ENCODE measurements at regions of chrX and their contacts with region 1.

Region 1: DNA sequence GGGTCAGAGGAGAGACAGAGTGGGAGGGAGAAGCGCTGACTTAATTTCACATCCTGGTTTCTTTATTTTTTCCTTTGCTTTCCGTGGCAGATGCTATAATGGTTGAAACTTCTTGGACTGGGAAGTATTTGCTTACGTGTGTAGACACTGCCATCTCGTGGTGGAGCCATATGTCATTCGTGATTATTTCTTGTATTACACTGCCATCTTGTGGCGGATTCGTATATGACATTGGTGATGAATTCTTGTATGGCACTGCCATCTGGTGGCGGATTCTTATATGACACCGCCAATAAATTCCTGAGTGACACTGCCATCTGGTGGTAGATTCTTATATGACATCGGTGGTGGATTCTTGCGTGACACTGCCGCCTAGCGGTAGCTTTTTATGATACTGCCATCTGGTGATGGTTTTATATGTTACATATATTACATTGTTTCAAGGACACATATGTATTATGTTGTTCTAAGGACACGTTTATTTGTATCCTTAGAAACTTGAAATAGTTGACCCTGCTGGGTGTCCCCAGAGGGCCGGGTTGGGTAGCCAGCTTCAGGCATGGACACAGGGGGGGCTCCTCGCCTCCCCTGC is 37.3 kb upstream of the CLCN4 start:
- DNase-seq: peak; percentile 64
- ATAC-seq: no peak
- H3K4me3 ChIP-seq: no peak overlapping the region
- H3K27ac ChIP-seq: no peak overlapping the region
- H3K4me1 ChIP-seq: no peaks in the 10 kb centered on the region
- H3K27me3 ChIP-seq: no peaks in the 10 kb centered on the region
- CTCF ChIP-seq: peak; percentile 98
- EP300 ChIP-seq: 0 out of 4 replicates have a peak, but pooled peaks of 1 of the 2 experiments have one; percentile 27
- POLR2A ChIP-seq: no peak
- RAD21 ChIP-seq: peak; percentile 99

Region 2: GRCh38 chrX:9626379-9626778 is 493.1 kb before region 1 on chrX:
- CTCF ChIA-PET with region 1: no interaction called
- POLR2A ChIA-PET with region 1: no interaction called
- in situ Hi-C with region 1: no loop called
- intact Hi-C with region 1: no loop called
- DNase-seq: no peak
- ATAC-seq: no peak
- H3K4me3 ChIP-seq: no peak overlapping the region
- H3K27ac ChIP-seq: no peak overlapping the region
- H3K4me1 ChIP-seq: peaks cover 10% of the 10 kb centered on the region
- H3K27me3 ChIP-seq: no peaks in the 10 kb centered on the region
- CTCF ChIP-seq: no peak
- EP300 ChIP-seq: no peak
- POLR2A ChIP-seq: no peak
- RAD21 ChIP-seq: no peak

Region 3: DNA sequence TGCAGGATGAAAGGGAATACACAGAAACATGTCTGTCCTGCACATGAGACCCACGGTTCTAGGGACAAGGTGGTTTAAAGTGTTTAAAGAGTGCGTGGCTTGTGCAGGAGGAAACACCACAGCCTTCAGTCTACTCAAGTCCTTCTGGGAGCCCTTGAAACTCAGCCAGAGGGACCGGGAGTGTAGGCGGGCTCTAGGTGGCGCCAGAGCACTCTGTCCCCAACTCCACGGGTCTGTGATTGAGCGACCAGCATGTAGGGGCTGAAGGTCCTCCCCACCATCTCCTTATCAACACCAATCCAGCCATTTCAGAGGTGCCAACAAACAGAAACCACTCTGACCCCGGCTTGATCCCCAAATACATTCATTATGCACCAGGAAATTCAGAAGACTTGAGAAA is 234.3 kb before region 1 on chrX:
- CTCF ChIA-PET with region 1: interaction called, 59 read pairs
- POLR2A ChIA-PET with region 1: no interaction called
- in situ Hi-C with region 1: no loop called
- intact Hi-C with region 1: loop called (anchors 1 kb)
- DNase-seq: peak; percentile 30
- ATAC-seq: peak; percentile 93
- H3K4me3 ChIP-seq: no peak overlapping the region
- H3K27ac ChIP-seq: no peak overlapping the region
- H3K4me1 ChIP-seq: 0 out of 2 replicates have a peak, but pooled peaks cover 21% of the 10 kb centered on the region
- H3K27me3 ChIP-seq: no peaks in the 10 kb centered on the region
- CTCF ChIP-seq: peak; percentile 78
- EP300 ChIP-seq: no peak
- POLR2A ChIP-seq: no peak
- RAD21 ChIP-seq: peak; percentile 36; the same call in 1 of the 2 replicates

Region 4: GRCh38 chrX:9995855-9996339 is 123.6 kb before region 1 on chrX:
- CTCF ChIA-PET with region 1: interaction called, 696 read pairs
- POLR2A ChIA-PET with region 1: no interaction called
- in situ Hi-C with region 1: loop called (anchors 5 kb)
- intact Hi-C with region 1: loop called (anchors 1 kb)
- DNase-seq: peak; percentile 60
- ATAC-seq: peak; percentile 86
- H3K4me3 ChIP-seq: no peak overlapping the region
- H3K27ac ChIP-seq: no peak overlapping the region
- H3K4me1 ChIP-seq: peaks cover 9% of the 10 kb centered on the region; the same call in 1 of the 2 replicates
- H3K27me3 ChIP-seq: no peaks in the 10 kb centered on the region
- CTCF ChIP-seq: peak; percentile 88
- EP300 ChIP-seq: no peak
- POLR2A ChIP-seq: no peak
- RAD21 ChIP-seq: peak; percentile 95

Region 5: DNA sequence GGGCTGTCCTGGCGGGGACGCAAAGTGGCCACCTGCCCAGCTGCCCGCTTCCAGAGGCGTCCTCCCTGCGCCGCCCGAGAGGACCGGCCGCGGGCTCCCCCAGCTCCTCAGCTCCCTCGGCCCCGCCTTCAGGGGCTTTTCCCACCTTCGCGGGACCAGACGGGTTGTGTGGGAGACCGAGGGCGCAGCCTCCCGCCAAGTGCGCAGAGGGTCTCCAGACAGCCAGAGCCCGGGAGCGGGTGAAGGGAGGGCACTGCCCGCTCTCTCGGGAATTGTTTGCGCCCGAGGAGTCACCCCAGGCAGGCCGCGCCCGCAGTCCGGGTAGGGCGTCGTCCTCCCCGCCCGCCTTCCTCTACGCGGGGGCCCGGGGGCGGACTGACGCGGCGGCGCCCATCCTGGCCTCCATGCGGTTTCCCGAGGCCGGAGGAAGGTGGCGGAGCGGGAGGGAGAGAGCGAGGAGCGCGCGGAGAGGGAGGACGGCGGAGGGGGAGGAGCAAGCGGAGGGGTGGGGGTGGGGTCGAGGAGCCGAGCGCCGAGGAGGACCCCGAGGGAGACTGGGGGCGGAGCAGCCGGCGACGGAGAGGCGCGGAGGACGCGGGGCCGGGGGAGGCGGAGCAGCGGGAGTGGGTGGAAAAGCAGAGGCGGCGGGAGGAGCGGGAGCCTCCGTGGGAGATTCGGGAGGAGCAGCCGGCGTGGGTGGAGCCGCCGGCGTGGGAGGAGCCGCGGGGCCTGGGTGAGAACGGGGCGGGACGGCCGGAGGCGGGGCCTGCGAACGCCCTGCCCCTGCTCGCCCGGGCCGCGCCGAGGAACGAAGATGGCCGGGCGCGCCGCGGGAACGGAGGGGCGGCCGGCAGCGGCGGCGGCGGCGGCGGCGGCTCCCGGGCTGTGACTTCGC is 104.8 kb before region 1 on chrX:
- CTCF ChIA-PET with region 1: interaction called, 40 read pairs
- POLR2A ChIA-PET with region 1: no interaction called
- in situ Hi-C with region 1: no loop called
- intact Hi-C with region 1: loop called (anchors 5 kb)
- DNase-seq: peak; percentile 48
- ATAC-seq: peak; percentile 84
- H3K4me3 ChIP-seq: peak overlapping the region; percentile 45 to 68 (median 53); a peak in 4 of 6 replicates
- H3K27ac ChIP-seq: peak overlapping the region; percentile 52
- H3K4me1 ChIP-seq: peaks cover 58% of the 10 kb centered on the region
- H3K27me3 ChIP-seq: no peaks in the 10 kb centered on the region
- CTCF ChIP-seq: no peak
- EP300 ChIP-seq: no peak
- POLR2A ChIP-seq: no peak
- RAD21 ChIP-seq: no peak

Region 6: GRCh38 chrX:10167573-10167972 is 48.1 kb after region 1 on chrX:
- CTCF ChIA-PET with region 1: interaction called, 16 read pairs
- POLR2A ChIA-PET with region 1: no interaction called
- in situ Hi-C with region 1: no loop called
- intact Hi-C with region 1: loop called (anchors 2 kb)
- DNase-seq: no peak
- ATAC-seq: no peak
- H3K4me3 ChIP-seq: no peak overlapping the region
- H3K27ac ChIP-seq: no peak overlapping the region
- H3K4me1 ChIP-seq: peaks cover 35% of the 10 kb centered on the region
- H3K27me3 ChIP-seq: no peaks in the 10 kb centered on the region
- CTCF ChIP-seq: no peak
- EP300 ChIP-seq: no peak
- POLR2A ChIP-seq: no peak
- RAD21 ChIP-seq: no peak

Region 7: GRCh38 chrX:10235851-10236250 is 116.4 kb after region 1 on chrX:
- CTCF ChIA-PET with region 1: no interaction called
- POLR2A ChIA-PET with region 1: no interaction called
- in situ Hi-C with region 1: no loop called
- intact Hi-C with region 1: no loop called
- DNase-seq: peak; percentile 3
- ATAC-seq: no peak
- H3K4me3 ChIP-seq: no peak overlapping the region
- H3K27ac ChIP-seq: no peak overlapping the region
- H3K4me1 ChIP-seq: no peaks in the 10 kb centered on the region
- H3K27me3 ChIP-seq: no peaks in the 10 kb centered on the region
- CTCF ChIP-seq: no peak
- EP300 ChIP-seq: no peak
- POLR2A ChIP-seq: no peak
- RAD21 ChIP-seq: no peak

Region 8: DNA sequence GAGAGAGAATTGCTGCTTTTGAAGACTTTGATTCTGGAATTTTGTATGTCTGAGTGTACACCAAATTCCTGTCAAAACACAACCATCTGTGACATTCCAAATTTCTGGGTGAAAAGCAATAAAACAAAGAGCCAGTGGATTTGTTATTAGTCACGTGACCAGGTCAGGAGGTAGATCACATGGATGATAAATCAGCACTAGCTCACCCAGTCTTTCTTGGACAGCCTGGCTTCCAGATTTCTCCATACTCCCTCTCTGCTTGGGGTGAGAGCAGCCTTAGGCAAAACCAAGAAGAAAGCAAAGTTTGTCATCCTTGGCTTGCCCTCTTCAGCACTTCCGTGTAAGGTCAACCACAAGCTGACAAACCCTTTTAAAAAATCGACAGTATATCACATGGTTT is 231.5 kb after region 1 on chrX:
- CTCF ChIA-PET with region 1: no interaction called
- POLR2A ChIA-PET with region 1: no interaction called
- in situ Hi-C with region 1: no loop called
- intact Hi-C with region 1: no loop called
- DNase-seq: no peak
- ATAC-seq: no peak
- H3K4me3 ChIP-seq: no peak overlapping the region
- H3K27ac ChIP-seq: no peak overlapping the region
- H3K4me1 ChIP-seq: no peaks in the 10 kb centered on the region
- H3K27me3 ChIP-seq: no peaks in the 10 kb centered on the region
- CTCF ChIP-seq: no peak
- EP300 ChIP-seq: no peak
- POLR2A ChIP-seq: no peak
- RAD21 ChIP-seq: no peak

Region 9: DNA sequence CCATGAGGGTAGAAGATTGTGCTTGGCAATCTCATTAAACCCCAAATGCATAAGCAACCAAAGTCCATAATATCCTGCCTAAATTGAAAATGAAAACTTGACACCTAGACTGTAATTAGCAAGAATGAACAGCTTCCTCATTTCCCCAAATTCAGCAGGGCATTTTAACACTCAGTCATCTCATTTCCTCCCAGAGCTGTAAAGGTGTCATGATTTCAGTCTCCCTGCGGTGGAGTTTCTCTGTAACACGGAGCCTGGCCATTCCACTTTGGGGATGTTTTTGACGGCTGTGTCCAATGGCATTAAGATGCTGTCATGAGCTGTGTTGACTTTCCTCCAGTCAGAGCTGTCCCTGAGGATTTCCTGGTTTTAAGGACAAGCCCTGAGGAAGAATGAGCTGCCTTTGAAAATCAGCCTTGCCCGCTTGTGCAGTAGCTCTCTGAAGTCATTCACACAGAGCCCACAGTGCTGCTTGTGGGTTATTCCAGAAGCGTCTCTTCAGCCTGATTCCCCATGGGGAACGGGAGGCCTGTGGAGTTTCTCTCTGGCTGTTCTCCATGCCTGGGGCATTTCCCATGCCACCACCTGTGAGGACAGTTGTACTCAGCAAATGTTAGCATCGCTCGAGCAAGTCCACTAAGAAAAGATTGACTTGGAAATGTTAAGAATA is 313.9 kb after region 1 on chrX:
- CTCF ChIA-PET with region 1: no interaction called
- POLR2A ChIA-PET with region 1: no interaction called
- in situ Hi-C with region 1: no loop called
- intact Hi-C with region 1: no loop called
- DNase-seq: no peak
- ATAC-seq: no peak
- H3K4me3 ChIP-seq: no peak overlapping the region
- H3K27ac ChIP-seq: no peak overlapping the region
- H3K4me1 ChIP-seq: no peaks in the 10 kb centered on the region
- H3K27me3 ChIP-seq: no peaks in the 10 kb centered on the region
- CTCF ChIP-seq: no peak
- EP300 ChIP-seq: no peak
- POLR2A ChIP-seq: no peak
- RAD21 ChIP-seq: no peak

Measured in HepG2 (cell line).